ENCODE measurements at regions of chr22 and their contacts with region 1.

Region 1: DNA sequence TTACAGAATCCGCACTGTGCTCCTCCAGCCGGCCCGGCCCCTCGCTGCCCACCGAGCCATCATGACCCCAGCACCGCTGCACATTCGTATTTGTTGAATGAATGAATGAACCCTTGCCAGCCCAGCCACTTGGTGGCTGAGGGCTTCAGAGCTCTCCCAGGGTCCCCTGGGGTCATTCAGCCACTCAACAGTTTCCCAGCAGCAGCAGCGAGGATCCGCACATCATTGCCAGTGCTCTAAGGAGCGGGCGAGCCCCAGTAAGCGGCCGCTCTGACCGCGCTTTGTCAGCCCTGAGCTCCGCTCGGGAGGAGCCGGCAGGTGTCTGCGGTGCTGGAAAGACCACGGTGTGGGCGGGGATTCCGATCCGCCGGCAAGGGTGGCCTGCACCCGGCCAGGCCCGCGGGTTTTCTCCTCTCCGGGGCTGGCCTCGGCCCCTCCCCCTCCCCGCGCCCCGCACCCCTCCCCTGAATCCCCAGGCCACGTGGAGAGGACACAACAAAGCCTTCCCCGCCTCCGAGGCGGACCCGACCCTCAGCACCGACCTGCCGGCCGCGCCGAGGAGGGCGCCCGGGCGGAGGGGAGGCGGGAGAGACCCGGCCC is 563 bp downstream of the BID start:
- DNase-seq: peak; percentile 79
- H3K4me3 ChIP-seq: peak overlapping the region; percentile 75
- H3K27ac ChIP-seq: peak overlapping the region; percentile 79
- H3K4me1 ChIP-seq: peaks cover 56% of the 10 kb centered on the region
- CTCF ChIP-seq: no peak

Region 2: GRCh38 chr22:17638432-17639246 is 135.1 kb before region 1 on chr22 and contains the start of gene BCL2L13:
- CTCF ChIA-PET with region 1: no interaction called
- POLR2A ChIA-PET with region 1: no interaction called
- intact Hi-C with region 1: loop called (anchors 10 kb)
- DNase-seq: peak; percentile 95
- H3K4me3 ChIP-seq: peak within 1 kb of the TSS; percentile 81
- H3K27ac ChIP-seq: peak within 1 kb of the TSS; percentile 81
- H3K4me1 ChIP-seq: peaks cover 19% of the 10 kb centered on the region
- CTCF ChIP-seq: no peak
- total RNA-seq, gene BCL2L13: 21.7 and 25.2 TPM in 2 replicates

Region 3: DNA sequence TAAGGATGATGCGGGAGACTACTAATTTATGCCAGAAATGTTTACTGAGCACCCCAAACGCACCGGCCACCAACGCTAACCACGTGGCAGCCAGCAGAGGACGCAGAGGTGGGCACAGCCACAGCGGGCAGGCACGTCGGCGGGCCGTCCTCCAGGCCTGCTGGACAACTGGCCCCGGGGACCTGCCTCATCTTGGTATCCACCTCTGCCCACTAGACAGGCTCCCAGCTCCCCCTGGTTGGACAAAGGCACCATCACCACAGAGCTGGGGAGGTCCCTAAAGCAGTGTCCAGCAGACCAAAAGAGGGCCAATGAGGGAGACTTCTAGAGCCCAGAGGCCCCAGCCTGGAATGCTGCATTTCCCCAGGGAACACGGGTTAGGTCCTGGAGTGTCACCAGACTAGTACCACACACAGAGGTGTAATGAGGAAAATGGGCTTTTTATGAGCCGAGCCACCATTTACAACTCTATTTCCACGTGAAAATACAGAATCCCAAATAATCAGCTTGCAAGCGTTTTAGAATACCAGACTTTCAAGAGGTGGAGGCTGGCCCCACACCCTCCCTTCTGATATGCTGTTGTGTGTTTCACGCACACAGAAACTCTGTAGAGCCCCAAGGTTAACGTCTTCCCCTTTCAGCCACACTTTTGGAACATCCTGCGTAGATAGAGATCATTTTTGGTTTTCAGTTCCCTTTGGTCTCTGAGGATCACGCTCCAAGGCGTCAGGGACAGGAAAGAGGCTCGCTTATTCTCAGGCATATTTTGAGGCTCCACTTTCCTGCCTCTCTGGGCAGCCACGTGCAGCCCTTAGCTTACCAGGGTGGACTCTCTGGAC is 24.2 kb after region 1 on chr22:
- CTCF ChIA-PET with region 1: interaction called, 8 read pairs
- POLR2A ChIA-PET with region 1: interaction called, 8 read pairs
- intact Hi-C with region 1: loop called (anchors 1 kb)
- DNase-seq: peak; percentile 86
- H3K4me3 ChIP-seq: peak overlapping the region; percentile 63
- H3K27ac ChIP-seq: peak overlapping the region; percentile 96
- H3K4me1 ChIP-seq: peaks cover 85% of the 10 kb centered on the region
- CTCF ChIP-seq: no peak

Region 4: DNA sequence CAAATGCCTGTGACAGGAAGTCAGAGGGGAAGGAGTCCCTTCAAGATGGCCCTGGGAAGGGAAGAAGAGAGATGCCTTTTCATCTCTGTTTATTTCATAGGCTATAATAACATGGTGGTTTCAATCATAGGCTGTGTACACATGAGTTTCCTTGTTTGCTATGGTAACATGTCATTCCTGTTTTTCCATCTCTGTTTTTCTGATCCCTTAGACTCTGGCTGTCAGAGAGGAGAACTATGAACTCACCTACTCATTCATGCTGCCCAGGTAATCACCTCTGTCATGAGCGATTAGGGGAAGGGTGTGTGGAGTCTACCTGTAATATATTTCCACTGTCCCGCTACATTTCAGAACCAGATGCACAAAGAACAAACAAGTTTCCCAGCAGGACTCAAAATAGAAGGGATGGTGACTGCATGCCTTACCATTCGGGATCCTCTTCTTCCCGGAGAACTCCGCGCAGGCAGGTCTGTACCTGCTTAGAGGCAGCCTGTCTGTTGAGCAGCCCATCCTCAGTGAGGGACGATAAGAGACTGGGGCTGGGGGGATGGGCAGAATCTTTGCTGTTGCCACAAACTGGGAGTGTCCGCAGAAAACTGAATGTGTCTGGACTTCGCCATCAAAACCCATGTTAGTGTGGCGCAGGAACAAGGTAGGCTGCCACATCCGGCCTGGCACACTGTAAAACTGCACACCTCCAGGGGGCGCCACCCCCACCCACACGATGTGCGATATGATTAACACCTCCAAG is 297.0 kb after region 1 on chr22:
- CTCF ChIA-PET with region 1: no interaction called
- POLR2A ChIA-PET with region 1: interaction called, 4 read pairs
- intact Hi-C with region 1: loop called (anchors 5 kb)
- DNase-seq: peak; percentile 63
- H3K4me3 ChIP-seq: peak overlapping the region; percentile 57
- H3K27ac ChIP-seq: peak overlapping the region; percentile 99
- H3K4me1 ChIP-seq: peaks cover 99% of the 10 kb centered on the region
- CTCF ChIP-seq: peak; percentile 96

Measured in OCI-LY7 (cell line).